Breast epithelium (tissue), 4 donors: ENCODE measurements at regions of chr1 and their contacts with region 1.

Region 1: GRCh38 chr1:26799479-26800142 is 11.9 kb downstream of the PIGV start:
- DNase-seq: peak; percentile 38 to 71
- H3K4me3 ChIP-seq: peak overlapping the region in 1 of 3 donors; percentile 20
- H3K27ac ChIP-seq: peak overlapping the region; percentile 60 to 90
- H3K4me1 ChIP-seq: no peaks in the 10 kb centered on the region
- H3K27me3 ChIP-seq: no peaks in the 10 kb centered on the region
- CTCF ChIP-seq: no peak
- POLR2A ChIP-seq: no peak

Region 2: GRCh38 chr1:26500488-26501175 is 299.0 kb before region 1 on chr1:
- intact Hi-C with region 1: no loop called
- DNase-seq: peak; percentile 78 to 90
- H3K4me3 ChIP-seq: peak overlapping the region; percentile 57 to 96 (median 83)
- H3K27ac ChIP-seq: peak overlapping the region; percentile 95 to 98
- H3K4me1 ChIP-seq: no peaks in the 10 kb centered on the region
- H3K27me3 ChIP-seq: no peaks in the 10 kb centered on the region
- CTCF ChIP-seq: peak in 1 of 3 donors; percentile 12
- POLR2A ChIP-seq: no peak

Region 3: DNA sequence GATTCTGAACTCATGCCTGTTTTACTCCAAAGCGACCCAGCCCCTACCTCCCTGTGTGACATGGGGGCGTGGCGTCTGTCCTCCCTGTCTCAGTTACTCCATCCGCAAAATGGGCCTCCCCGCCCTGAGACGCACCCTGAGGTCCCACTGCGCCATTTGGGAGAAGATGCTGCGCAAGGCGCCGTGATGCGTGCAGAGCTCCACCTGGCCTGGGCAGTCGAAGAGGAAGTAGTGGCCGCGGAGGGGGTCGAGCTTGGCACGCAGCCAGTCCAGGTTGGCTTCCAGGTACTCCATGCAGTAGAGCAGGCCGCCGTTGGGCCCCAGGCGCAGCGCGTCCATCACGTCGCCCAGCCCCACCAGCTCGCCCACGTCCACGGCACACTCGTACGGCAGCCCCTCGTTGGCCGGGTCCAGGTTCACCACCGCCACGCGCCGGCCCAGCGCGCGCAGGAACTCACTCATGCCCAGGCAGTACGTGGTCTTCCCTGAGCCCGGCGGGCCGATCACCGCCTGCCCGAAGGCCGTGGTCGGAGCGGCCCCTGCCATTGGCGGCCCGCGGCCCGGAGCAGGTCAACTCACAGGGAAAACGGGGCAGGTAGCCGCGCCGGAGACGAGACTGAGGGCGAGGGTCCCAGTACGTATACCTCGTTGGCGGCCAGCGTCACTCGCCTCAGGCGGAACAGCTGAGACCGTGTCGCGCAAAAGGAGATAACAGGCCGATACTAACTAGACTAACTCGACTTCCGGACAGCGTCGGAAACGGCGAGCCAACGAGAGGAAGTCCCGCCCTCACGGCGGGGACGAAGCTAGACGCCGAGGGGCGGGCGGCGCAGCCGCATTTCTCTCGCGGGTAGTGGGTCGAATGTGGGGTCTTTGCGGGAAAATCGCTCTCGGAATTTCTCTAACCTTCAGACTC is 90.2 kb after region 1 on chr1 and contains the start of gene GPN2:
- intact Hi-C with region 1: loop called (anchors 10 kb)
- DNase-seq: peak; percentile 62 to 64
- H3K4me3 ChIP-seq: peak within 1 kb of the TSS; percentile 82 to 96 (median 95)
- H3K27ac ChIP-seq: peak within 1 kb of the TSS; percentile 87 to 90
- H3K4me1 ChIP-seq: peaks cover 9 to 13% of the 10 kb centered on the region in 2 donors
- H3K27me3 ChIP-seq: no peaks in the 10 kb centered on the region
- CTCF ChIP-seq: no peak
- POLR2A ChIP-seq: peak; percentile 50
- total RNA-seq, gene GPN2: 8.5 to 17.7 (median 13.4) TPM